Activated CD4-positive, alpha-beta T cell treated with anti-CD3 and anti-CD28 coated beads, Interleukin-2, amount 10 ng/mL, durations not matched to agents 24 days and 14 days (primary cell): ENCODE measurements at regions of chr19 and their contacts with region 1.

Region 1: DNA sequence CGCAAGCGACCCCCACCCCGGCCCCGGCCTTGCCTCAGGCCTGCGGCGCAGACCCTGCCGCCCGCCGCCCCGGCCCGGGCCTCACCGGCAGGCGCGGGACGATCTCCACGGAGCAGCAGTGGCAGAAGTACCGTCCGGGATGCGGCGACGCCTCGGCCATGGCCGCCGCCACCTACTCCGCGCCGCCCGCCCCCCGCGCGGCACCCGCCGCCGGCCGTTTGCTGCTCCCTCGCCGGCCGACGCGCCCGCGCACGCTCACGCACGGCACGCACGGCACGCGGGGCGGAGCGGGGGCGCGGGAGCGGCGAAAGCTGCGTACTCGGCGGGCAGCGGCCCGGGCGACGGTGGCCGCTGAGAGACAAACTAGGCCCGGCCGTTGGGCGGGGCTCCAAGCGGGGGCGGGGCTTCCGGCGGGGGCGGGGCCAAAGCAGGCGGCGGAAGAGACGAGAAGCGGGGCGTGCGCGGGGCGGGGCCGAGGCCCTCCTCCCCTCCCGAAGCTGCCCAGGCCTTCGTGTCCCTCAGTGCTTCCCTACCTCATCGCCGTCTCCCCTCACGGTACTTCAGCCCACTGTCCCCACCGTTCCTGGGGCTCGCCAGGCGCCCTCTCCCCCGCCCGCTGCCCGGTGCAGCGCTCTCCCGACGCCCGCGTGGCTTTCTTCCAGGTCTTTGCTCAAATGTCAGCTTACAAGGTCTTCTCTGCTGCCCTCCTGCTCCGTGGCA is at the start of gene RNF126:
- DNase-seq: peak; percentile 96
- H3K4me3 Mint-ChIP-seq: peak within 1 kb of the TSS; percentile 94
- H3K27ac Mint-ChIP-seq: peak within 1 kb of the TSS; percentile 93
- H3K4me1 Mint-ChIP-seq: peaks cover 20% of the 10 kb centered on the region
- H3K27me3 Mint-ChIP-seq: peaks cover 2% of the 10 kb centered on the region
- total RNA-seq, gene RNF126: 109 and 110 TPM in 2 replicates

Region 2: DNA sequence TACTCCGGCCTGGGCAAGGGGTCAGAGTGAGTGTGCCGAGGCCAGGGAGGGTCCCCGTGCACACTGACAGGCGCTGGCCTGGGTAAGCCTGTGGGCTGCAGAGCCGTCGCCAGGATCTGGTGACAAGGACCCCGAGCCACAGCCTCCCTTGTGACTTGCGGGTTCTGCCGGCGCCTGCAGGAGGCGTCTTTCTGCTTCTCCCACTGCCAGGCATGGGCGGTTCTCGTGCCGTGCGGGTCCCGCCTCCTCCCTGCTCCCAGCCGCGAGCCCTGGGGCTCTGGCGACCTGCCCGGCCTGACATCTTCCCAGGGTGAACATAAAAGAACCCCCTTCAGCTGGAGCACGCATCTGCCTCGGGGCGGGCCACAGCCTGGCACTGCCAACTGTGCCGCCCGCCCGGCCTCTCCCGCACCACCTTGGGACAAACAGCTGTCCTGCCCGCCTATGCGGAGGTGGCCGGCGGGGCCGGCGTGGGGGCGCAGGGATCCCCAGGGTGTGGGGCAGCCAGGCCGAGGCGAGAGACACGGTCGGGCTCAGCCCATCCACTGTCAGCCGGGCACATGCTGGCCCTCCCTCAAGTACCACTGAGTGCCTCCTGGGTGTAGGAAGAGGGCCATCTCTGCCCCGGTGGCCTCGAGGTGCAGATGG is 74.9 kb before region 1 on chr19:
- intact Hi-C with region 1: loop called (anchors 1 kb)
- DNase-seq: peak; percentile 88
- H3K4me3 Mint-ChIP-seq: peak overlapping the region; percentile 28
- H3K27ac Mint-ChIP-seq: no peak overlapping the region
- H3K4me1 Mint-ChIP-seq: peaks cover 2% of the 10 kb centered on the region
- H3K27me3 Mint-ChIP-seq: peaks cover 13% of the 10 kb centered on the region

Region 3: DNA sequence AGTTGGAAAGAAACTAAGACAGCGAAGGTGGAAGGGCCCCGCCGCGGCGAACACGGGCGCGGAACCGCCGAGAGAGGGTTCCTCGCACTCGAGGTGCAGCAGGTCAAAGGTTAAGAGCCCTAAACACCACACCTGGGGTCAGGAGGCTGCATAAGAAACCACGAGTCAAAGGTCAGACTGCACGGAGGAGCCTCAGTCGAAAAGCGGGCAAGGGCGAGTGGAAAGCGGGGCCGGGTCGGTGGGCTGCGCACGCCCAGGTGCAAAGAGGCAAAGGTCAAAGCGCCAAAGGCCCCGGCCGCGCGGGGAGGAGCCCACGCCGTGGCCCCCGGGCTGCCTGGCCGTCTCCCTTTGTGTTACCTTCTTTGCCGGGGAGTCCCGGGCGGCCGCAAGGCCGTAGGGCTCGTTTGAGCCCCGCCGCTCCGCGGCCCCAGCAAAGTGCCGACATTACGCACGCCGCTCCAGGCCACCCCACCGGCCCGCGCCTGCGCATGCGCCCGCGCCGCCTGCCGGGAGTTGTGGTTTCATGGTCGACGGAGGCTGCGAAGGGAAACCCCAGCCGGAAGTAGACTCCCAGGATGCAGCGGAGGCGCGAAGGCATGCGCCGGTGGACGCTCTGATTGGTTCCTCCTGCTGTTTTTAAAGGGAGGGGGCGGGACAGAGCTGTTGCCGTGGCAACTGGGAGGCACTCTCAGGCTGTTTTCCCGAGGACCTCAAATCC is 29.9 kb before region 1 on chr19 and contains the start of gene POLRMT:
- intact Hi-C with region 1: loop called (anchors 1 kb)
- DNase-seq: peak; percentile 99
- H3K4me3 Mint-ChIP-seq: peak within 1 kb of the TSS; percentile 98
- H3K27ac Mint-ChIP-seq: peak within 1 kb of the TSS; percentile 97
- H3K4me1 Mint-ChIP-seq: peaks cover 17% of the 10 kb centered on the region
- H3K27me3 Mint-ChIP-seq: no peaks in the 10 kb centered on the region
- total RNA-seq, gene POLRMT: 103 and 104 TPM in 2 replicates

Region 4: GRCh38 chr19:680287-681028 is 17.3 kb after region 1 on chr19:
- intact Hi-C with region 1: loop called (anchors 1 kb)
- DNase-seq: peak; percentile 99
- H3K4me3 Mint-ChIP-seq: peak overlapping the region; percentile 88
- H3K27ac Mint-ChIP-seq: peak overlapping the region; percentile 99
- H3K4me1 Mint-ChIP-seq: peaks cover 4% of the 10 kb centered on the region
- H3K27me3 Mint-ChIP-seq: peaks cover 3% of the 10 kb centered on the region

Region 5: DNA sequence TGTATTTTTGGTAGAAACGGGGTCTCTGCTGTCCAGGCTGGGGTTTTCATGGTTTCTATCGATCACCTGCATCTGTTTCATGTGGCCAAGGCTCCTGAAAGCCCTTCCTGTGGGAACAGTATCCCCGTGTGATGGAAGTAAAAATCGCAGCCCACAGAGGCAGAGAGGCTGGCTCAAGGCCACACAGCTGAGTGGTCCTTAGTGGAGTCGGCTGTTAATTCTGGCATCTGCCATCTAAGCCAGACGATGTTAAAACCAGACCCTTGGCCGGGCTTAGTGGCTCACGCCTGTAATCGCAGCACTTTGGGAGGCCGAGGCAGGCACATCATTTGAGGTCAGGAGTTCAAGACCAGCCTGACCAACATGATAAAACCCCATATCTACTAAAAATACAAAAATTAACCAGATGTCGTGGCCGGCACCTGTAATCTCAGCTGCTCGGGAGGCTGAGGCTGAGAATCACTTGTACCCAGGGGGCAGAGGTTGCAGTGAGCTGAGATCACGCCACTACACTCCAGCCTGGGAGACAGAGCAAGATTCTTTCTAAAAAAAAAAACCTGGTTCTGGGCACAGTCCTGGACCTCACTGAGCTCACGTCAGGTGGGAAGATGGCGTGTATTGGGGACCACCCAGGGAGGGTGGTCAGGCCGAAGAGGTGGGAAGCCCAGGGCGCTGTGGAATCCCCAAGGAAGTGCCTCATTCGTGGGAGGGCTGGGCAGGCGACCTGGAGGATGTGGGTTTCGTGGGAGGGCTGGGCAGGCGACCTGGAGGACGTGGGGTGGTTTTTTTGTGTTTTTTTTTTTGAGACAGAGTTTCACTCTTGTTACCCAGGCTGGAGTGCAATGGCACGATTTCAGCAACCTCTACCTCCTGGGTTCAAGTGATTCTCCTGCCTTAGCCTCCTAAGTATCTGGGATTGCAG is 69.3 kb after region 1 on chr19:
- intact Hi-C with region 1: loop called (anchors 1 kb)
- DNase-seq: no peak
- H3K4me3 Mint-ChIP-seq: no peak overlapping the region
- H3K27ac Mint-ChIP-seq: peak overlapping the region; percentile 11
- H3K4me1 Mint-ChIP-seq: peaks cover 11% of the 10 kb centered on the region
- H3K27me3 Mint-ChIP-seq: no peaks in the 10 kb centered on the region